ENCODE measurements at regions of chr7 and their contacts with region 1.

Region 1: GRCh38 chr7:111763221-111763801 is 201.0 kb upstream of the IMMP2L start:
- DNase-seq: peak; percentile 53 to 76 (median 72)
- H3K4me3 ChIP-seq: no peak overlapping the region
- H3K27ac ChIP-seq: no peak overlapping the region
- H3K4me1 ChIP-seq: no peaks in the 10 kb centered on the region
- H3K27me3 ChIP-seq: no peaks in the 10 kb centered on the region

Region 2: DNA sequence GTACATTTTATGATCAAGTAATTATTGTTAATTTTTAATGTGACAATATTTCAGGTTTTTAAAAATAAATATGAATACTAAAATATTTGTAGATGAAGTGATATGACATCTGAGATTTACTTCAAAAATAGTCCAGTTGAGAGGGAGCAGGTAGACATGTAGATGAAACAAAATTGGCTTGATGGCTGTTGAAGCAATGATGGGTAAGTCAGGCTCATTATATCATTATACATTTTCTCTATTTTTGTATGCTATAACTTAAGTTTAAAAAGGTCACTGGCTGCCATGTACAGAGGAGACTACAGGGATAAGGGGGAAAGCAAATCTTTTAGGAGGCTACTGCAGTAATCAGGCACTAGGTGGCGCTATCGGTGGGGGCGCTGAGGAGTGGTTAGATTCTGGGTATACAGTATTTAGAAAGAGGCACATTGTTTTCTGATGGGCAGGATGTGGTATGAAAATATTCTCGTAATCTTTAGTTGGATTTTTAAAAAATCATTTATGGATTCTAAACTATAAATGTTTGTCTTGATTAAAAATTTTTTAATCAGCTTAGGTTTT is 11.2 kb before region 1 on chr7:
- CTCF ChIA-PET with region 1: interaction called, 20 read pairs
- POLR2A ChIA-PET with region 1: no interaction called
- DNase-seq: peak; percentile 53 to 75 (median 69)
- H3K4me3 ChIP-seq: no peak overlapping the region
- H3K27ac ChIP-seq: no peak overlapping the region
- H3K4me1 ChIP-seq: no peaks in the 10 kb centered on the region
- H3K27me3 ChIP-seq: no peaks in the 10 kb centered on the region

Region 3: DNA sequence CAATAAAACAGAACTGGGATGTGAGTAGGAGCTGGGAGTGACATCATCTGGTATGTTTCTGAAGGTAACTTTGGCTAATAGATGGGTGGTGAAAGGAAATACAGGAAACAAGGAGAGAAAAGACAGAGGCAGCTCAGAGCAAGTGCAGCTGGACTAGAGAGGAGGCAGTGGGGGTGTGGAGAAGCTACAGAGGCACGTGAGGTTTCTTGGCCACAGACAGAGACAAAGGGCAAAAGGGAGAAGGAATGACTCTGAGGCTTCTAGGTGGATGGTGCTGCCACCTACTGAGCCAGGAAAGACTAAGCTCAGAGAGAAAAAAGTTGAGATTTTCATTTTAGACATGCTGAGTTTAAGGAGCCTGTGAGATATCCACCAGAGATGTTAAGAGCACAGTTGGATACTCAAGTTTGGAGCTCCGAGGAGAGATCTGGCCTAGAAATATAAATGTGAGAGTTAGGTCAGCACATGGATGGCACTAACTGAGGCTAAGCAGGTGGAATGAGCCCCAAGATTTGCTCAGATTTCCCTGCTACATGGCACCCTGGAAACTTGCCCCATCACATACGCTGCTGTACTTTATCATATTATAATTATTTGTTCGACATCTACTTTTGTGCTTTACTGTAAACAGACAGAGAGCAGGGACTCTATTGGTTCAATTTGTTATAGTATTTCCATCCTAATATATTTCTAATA is 92.0 kb after region 1 on chr7:
- CTCF ChIA-PET with region 1: interaction called, 55 read pairs
- POLR2A ChIA-PET with region 1: interaction called, 4 read pairs
- DNase-seq: peak; percentile 52 to 73 (median 69)
- H3K4me3 ChIP-seq: no peak overlapping the region
- H3K27ac ChIP-seq: no peak overlapping the region
- H3K4me1 ChIP-seq: peaks cover 0 to 3% (median 0%) of the 10 kb centered on the region in 4 experiments
- H3K27me3 ChIP-seq: no peaks in the 10 kb centered on the region

Measured in common myeloid progenitor, CD34-positive (primary cell).